IMR-90 (cell line): ENCODE measurements at regions of chr5 and their contacts with region 1.

Region 1: DNA sequence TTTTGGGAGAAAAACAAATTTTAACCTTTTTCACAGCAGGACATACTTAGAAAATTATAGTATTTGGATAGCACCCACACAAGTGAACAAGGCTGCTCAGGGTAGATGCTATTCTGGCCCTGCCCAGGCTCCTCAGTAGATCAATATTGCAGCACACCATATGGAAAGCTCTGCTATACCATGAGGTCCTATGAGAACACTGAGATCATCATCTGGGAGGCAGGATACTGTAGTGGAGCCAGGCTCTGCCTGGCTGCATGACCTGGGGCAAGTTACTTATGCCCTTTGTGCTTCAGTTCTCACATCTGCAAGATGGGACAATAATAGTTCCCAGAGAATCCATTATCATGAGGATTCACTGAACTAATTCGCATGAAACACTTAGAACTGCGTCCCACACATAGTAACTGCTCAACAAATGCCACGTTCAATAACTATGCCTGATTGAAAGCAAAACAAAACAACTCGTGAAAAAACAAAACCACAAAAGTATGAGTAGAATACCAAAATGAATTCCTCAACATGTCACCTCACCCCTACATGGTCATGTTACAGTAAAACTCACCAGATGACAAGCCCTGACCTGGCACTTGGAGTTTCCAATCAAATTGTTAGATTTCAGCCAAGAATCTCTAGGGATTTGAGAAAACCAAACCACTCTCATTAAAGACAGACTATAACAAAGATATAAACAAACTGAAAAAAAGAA is 31.9 kb downstream of the ARSB start:
- DNase-seq: peak; percentile 19
- ATAC-seq: peak; percentile 37
- H3K4me3 ChIP-seq: no peak overlapping the region
- H3K27ac ChIP-seq: no peak overlapping the region
- H3K4me1 ChIP-seq: peaks cover 6% of the 10 kb centered on the region; the same call in 1 of the 2 replicates
- H3K27me3 ChIP-seq: no peaks in the 10 kb centered on the region
- CTCF ChIP-seq: no peak
- POLR2A ChIP-seq: no peak
- RAD21 ChIP-seq: no peak

Region 2: DNA sequence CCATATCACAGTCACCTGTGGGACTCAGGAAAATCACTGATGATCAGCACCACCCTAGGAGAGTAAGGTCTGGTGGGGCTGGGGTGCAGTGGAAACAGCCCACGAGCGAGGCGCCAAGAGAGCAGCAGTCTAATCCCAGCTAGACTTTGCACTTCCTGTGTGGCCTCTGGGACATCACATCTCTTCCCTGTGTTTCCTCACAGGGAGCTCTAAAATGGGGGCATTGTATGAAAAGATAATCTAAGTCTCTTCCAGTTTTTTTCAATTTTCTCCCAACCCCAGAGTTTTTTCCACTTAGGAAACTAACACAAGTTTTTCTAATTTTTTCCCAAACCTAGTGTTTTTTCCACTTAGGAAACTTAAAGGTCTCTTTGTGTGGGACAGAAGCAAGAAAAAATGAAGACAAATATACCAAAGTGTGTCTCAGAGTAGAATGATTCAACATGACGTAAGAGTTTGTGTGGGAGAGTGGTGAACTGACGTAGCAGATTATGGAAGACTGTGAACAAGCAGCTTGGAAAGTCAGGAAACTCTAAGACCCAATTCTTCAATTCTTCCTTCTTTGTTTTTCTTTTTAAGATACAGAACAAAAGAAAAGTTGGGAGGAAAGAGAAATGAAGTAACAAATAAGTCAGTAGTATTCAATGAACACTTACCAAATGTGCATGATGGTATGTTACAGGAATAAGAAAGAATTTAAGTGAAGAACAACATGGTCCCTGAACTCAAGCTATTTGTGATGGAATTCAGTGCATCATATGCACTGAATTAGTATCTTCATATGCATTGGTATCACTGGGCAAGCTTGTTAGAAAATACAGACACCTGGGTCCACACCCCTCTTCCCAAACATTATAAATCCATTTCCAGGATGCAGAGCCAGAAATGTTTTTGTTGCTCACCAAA is 355.9 kb before region 1 on chr5:
- CTCF ChIA-PET with region 1: no interaction called
- POLR2A ChIA-PET with region 1: no interaction called
- dilution Hi-C with region 1: no loop called
- in situ Hi-C with region 1: no loop called
- intact Hi-C with region 1: no loop called
- DNase-seq: peak; percentile 97
- ATAC-seq: peak; percentile 13; the same call in 1 of the 2 replicates
- H3K4me3 ChIP-seq: no peak overlapping the region
- H3K27ac ChIP-seq: peak overlapping the region; percentile 67
- H3K4me1 ChIP-seq: peaks cover 35% of the 10 kb centered on the region
- H3K27me3 ChIP-seq: no peaks in the 10 kb centered on the region
- CTCF ChIP-seq: no peak
- POLR2A ChIP-seq: no peak
- RAD21 ChIP-seq: no peak

Region 3: DNA sequence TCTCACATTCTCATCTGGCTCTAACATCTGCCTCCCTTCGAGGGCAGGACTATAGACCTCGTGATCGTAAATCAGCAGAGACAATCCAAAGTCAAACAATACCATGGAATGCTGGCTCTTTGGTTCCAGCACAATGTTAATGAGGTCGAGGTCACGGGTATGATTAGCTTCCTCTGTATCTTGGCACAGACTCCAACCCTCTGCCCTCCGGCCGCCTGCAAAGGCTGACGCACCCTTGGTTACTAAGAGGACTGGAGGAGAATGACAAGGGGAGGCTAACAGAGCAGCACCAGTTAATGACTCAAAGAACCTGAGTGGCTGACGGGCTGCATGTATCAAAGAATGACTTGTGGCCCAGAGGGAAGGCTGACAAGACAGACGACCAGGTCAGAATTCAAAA is 314.8 kb before region 1 on chr5:
- CTCF ChIA-PET with region 1: no interaction called
- POLR2A ChIA-PET with region 1: no interaction called
- dilution Hi-C with region 1: no loop called
- in situ Hi-C with region 1: no loop called
- intact Hi-C with region 1: loop called (anchors 10 kb)
- DNase-seq: peak; percentile 92
- ATAC-seq: peak; percentile 76
- H3K4me3 ChIP-seq: no peak overlapping the region
- H3K27ac ChIP-seq: peak overlapping the region; percentile 2; the same call in 1 of the 2 replicates
- H3K4me1 ChIP-seq: peaks cover 36% of the 10 kb centered on the region
- H3K27me3 ChIP-seq: no peaks in the 10 kb centered on the region
- CTCF ChIP-seq: no peak
- POLR2A ChIP-seq: 0 out of 2 replicates have a peak, but pooled peaks have one; percentile 20
- RAD21 ChIP-seq: no peak; the same call in 1 of the 2 replicates

Region 4: DNA sequence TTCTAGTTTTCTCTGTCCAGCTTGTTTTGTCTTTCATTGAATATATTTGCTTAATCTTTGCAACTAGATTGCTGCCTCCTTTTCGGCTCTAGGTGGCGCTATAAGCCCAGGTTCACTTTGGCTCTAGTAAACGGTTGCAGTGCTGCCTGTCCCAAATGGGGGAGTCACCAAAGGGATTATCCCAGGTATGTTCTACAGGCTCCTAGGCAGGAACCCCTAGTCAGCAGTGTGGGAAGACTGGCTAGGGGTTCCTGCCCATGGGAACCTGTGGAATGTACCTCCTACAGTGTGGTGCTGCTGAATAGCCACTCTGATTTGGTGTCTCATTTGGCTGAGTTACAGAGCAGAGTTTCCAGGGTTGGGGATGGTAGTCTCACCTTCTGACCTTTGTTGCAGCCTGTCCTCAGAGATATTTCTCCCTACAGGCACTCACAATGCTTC is 53.3 kb before region 1 on chr5:
- CTCF ChIA-PET with region 1: interaction called, 4 read pairs
- POLR2A ChIA-PET with region 1: no interaction called
- dilution Hi-C with region 1: no loop called
- in situ Hi-C with region 1: no loop called
- intact Hi-C with region 1: loop called (anchors 5 kb)
- DNase-seq: peak; percentile 67
- ATAC-seq: peak; percentile 19; the same call in 1 of the 2 replicates
- H3K4me3 ChIP-seq: no peak overlapping the region
- H3K27ac ChIP-seq: no peak overlapping the region
- H3K4me1 ChIP-seq: peaks cover 9% of the 10 kb centered on the region
- H3K27me3 ChIP-seq: no peaks in the 10 kb centered on the region
- CTCF ChIP-seq: peak; percentile 85
- POLR2A ChIP-seq: peak; percentile 39; the same call in 1 of the 2 replicates
- RAD21 ChIP-seq: peak; percentile 93

Region 5: DNA sequence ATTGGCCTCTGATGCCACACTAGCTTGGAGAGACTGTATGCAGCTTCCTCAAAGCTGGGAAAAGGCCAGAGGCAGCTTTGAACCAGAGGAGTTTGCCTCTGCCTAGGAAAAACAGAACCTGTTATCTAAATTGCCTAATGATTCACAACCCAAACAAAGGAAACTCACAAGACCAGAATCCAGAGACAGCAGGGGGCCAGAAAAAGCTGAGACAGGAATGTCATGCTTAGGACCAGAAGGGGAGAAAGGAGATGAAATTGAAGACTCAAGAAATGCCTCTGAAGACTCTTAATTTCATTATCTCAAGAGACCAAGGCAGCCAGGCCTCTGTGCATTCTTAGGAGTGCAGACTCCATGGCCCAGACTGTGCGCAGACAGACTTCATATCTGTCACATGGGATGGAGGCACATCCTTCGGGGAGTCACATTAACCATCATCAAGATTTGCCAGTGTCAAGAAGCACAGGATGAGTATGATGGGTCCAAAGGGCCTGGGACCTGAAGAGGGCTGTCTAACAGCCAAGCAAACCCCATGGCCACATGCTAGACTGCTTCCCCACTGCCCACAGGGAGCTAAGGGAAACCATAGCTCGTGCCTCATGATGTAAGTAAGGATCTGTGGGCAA is 25.5 kb before region 1 on chr5:
- CTCF ChIA-PET with region 1: no interaction called
- POLR2A ChIA-PET with region 1: no interaction called
- dilution Hi-C with region 1: no loop called
- in situ Hi-C with region 1: no loop called
- intact Hi-C with region 1: no loop called
- DNase-seq: peak; percentile 84
- ATAC-seq: peak; percentile 66
- H3K4me3 ChIP-seq: no peak overlapping the region
- H3K27ac ChIP-seq: peak overlapping the region; percentile 11
- H3K4me1 ChIP-seq: peaks cover 5% of the 10 kb centered on the region
- H3K27me3 ChIP-seq: no peaks in the 10 kb centered on the region
- CTCF ChIP-seq: no peak
- POLR2A ChIP-seq: no peak
- RAD21 ChIP-seq: no peak

Region 6: GRCh38 chr5:79011219-79011836 is 58.1 kb after region 1 on chr5:
- CTCF ChIA-PET with region 1: no interaction called
- POLR2A ChIA-PET with region 1: no interaction called
- dilution Hi-C with region 1: no loop called
- in situ Hi-C with region 1: no loop called
- intact Hi-C with region 1: no loop called
- DNase-seq: peak; percentile 90
- ATAC-seq: peak; percentile 87
- H3K4me3 ChIP-seq: no peak overlapping the region
- H3K27ac ChIP-seq: peak overlapping the region; percentile 69; the same call in 1 of the 2 replicates
- H3K4me1 ChIP-seq: peaks cover 3% of the 10 kb centered on the region; the same call in 1 of the 2 replicates
- H3K27me3 ChIP-seq: no peaks in the 10 kb centered on the region
- CTCF ChIP-seq: peak; percentile 30
- POLR2A ChIP-seq: no peak
- RAD21 ChIP-seq: no peak

Region 7: GRCh38 chr5:79181419-79182022 is 228.3 kb after region 1 on chr5:
- CTCF ChIA-PET with region 1: no interaction called
- POLR2A ChIA-PET with region 1: no interaction called
- dilution Hi-C with region 1: no loop called
- in situ Hi-C with region 1: no loop called
- intact Hi-C with region 1: no loop called
- DNase-seq: no peak
- ATAC-seq: peak; percentile 69
- H3K4me3 ChIP-seq: no peak overlapping the region
- H3K27ac ChIP-seq: no peak overlapping the region
- H3K4me1 ChIP-seq: peaks cover 4% of the 10 kb centered on the region; the same call in 1 of the 2 replicates
- H3K27me3 ChIP-seq: peaks cover 2% of the 10 kb centered on the region; the same call in 1 of the 2 replicates
- CTCF ChIP-seq: no peak
- POLR2A ChIP-seq: no peak
- RAD21 ChIP-seq: no peak